ENCODE measurements at regions of chr7 and their contacts with region 1.

Region 1: DNA sequence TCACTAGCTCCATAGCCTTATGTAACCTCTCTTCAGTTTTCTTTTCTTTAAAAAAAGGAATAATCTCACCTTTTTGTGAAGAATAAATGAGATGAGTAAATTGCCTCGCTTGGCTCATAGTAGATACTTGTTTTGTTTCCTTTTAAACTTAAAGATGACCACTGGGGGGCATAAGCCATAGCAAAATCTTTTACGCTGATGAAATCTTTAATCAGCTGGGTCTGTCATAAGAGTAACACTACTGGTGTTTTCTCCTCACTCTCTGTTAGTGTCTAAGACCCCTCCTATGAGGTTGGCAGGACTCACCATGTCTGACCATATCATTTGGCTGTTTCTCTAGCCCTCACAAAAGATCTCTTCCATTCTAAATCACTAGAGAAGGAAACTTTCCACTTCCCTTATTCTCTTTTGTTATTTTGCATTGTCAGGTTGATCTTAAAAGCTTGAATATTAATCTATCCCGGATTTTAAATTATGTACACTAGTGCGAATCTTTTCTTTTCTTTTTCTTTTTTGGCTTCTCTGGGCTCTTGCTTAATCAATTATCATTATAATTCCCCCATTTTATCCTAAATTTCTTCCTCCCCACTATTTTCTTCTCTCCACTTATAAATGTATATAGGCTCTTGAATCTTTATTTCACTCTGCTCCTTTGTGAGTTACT is 12.5 kb downstream of the STAG3 start:
- DNase-seq: no peak
- ATAC-seq: peak; percentile 92
- H3K4me3 Mint-ChIP-seq: no peak overlapping the region
- H3K27ac Mint-ChIP-seq: peak overlapping the region; percentile 48
- H3K4me1 Mint-ChIP-seq: peaks cover 17% of the 10 kb centered on the region
- H3K27me3 Mint-ChIP-seq: no peaks in the 10 kb centered on the region

Region 2: DNA sequence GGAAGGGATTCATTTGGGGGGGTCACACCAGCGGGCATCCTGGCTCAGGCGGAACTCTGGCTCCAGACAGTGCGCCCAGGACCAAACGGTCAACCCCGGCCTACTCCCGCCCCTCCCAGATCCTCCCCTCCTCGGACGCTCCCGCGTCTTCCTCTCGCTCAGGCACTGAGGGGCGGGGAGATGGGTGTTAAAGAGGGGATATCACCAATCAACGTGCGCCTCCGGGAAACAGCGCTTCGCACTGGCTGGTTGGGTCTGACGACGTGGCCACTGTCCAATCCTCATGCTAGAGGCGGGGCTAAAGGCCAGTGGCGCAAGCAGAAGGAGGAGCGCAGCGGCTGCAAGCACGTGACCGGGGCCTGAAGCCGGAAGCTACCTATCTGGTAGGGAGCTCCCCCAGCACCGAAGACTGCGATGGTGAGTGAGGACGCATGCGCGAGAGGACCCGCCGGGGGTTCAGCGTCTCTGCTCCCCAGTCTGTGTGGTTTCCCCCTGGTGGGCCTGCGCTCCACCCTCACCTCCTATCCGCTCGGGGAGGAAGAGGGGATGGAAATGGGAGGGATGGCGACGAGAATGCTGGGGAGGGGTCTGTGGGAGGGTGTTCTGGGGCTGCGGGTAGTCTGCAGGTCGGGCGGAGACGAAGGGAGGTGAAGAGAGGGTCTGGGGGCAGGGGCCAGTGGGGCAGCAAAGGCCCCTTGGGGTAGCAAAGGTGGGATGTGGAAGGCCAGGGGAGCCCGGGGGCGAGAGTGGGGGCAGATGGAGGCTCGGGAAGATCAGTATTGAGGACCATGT is 41.4 kb before region 1 on chr7 and contains the start of gene LAMTOR4:
- CTCF ChIA-PET with region 1: interaction called, 11 read pairs
- DNase-seq: peak; percentile 100
- ATAC-seq: peak; percentile 99
- H3K4me3 Mint-ChIP-seq: peak within 1 kb of the TSS; percentile 94
- H3K27ac Mint-ChIP-seq: peak within 1 kb of the TSS; percentile 98
- H3K4me1 Mint-ChIP-seq: peaks cover 37% of the 10 kb centered on the region
- H3K27me3 Mint-ChIP-seq: no peaks in the 10 kb centered on the region
- total RNA-seq, gene LAMTOR4: 119 to 151 TPM

Region 3: DNA sequence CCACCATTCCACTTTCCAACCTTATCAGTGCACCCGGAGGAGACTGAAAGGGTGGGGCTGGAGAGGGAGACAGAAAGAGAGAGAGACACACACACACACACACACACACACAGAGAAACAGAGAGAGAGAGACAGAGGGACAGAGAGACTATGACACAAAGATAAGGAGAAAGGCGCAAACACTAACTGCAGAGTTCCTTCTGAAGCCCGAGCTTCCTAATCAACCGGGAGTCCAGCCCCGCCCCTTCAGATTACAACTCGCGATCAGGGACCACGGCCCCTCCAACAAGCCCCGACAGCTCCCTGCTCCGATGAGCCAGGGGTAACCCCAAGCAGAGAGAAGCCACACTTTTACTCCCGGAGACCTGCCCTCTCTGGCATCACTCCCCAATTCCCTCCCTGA is 22.3 kb before region 1 on chr7:
- CTCF ChIA-PET with region 1: interaction called, 11 read pairs
- DNase-seq: no peak
- ATAC-seq: no peak
- H3K4me3 Mint-ChIP-seq: peak overlapping the region; percentile 57
- H3K27ac Mint-ChIP-seq: peak overlapping the region; percentile 16
- H3K4me1 Mint-ChIP-seq: peaks cover 68% of the 10 kb centered on the region
- H3K27me3 Mint-ChIP-seq: peaks cover 43% of the 10 kb centered on the region

Region 4: DNA sequence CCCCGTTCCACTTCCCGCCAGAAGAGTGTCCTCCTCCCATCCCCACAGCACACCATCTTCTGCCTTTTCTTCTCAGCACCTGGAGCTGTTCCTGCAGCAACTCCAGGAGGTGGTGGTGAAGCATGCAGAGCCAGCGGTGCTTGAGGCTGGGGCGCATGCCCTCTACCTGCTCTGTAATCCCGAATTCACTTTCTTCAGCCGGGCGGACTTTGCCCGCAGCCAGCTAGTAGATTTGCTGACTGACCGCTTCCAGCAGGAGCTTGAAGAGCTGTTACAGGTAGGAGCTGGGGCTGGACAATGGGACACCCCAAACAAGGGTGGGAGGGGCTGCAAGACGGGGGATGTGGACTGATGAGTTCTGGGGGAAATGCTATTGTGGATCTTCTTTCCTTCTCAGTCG is 10.5 kb after region 1 on chr7:
- CTCF ChIA-PET with region 1: interaction called, 80 read pairs
- DNase-seq: no peak
- ATAC-seq: no peak
- H3K4me3 Mint-ChIP-seq: no peak overlapping the region
- H3K27ac Mint-ChIP-seq: no peak overlapping the region
- H3K4me1 Mint-ChIP-seq: peaks cover 8% of the 10 kb centered on the region
- H3K27me3 Mint-ChIP-seq: peaks cover 2% of the 10 kb centered on the region

Region 5: DNA sequence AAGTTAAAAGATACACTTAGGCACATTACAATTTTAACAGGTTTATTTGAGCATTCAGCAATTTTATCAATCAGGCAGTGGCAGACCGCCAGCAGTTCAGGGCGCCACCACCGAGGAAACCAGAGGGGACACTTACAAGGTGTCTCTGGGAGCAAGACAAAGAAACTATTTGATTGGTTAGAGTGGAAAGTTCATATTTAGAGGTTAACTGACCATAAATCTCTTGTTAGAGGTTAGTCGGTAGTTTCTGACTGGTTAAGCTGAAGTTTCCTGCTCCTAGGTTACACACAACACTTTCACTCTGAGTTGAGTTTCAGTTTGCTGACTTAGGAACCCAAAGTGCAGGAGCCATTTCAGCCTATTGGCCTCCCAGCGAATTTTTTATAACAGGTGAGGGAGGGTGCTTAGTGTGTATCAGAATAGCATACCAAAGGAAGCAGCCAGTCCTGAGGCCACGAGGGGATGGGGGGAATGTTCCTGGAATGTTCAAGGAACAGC is 18.8 kb after region 1 on chr7:
- CTCF ChIA-PET with region 1: interaction called, 80 read pairs
- DNase-seq: peak; percentile 88
- ATAC-seq: peak; percentile 89
- H3K4me3 Mint-ChIP-seq: peak overlapping the region; percentile 40
- H3K27ac Mint-ChIP-seq: peak overlapping the region; percentile 77
- H3K4me1 Mint-ChIP-seq: peaks cover 48% of the 10 kb centered on the region
- H3K27me3 Mint-ChIP-seq: no peaks in the 10 kb centered on the region

Region 6: DNA sequence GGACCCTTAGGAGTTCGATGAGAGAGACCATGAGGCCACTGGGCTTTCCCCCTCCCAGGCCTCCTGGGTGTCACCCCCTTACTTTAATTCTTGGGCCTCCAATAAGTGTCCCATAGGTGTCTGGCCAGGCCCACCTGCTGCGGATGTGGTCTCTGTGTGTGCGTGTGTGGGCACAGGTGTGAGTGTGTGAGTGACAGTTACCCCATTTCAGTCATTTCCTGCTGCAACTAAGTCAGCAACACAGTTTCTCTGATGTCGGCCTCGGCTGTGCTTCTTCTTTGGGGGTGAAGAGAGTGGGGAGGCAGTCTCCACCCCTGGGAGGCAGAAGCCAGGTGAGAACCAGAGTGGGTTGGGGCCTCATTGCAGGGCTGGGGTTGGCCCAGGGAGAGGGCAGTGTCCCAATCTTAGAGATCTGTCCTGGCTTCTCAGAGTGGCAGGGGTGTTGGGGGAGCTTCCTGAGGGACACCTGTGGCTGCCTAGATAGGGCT is 31.1 kb after region 1 on chr7:
- CTCF ChIA-PET with region 1: interaction called, 20 read pairs
- DNase-seq: peak; percentile 92
- ATAC-seq: peak; percentile 48
- H3K4me3 Mint-ChIP-seq: peak overlapping the region; percentile 98
- H3K27ac Mint-ChIP-seq: peak overlapping the region; percentile 100
- H3K4me1 Mint-ChIP-seq: peaks cover 58% of the 10 kb centered on the region
- H3K27me3 Mint-ChIP-seq: no peaks in the 10 kb centered on the region